Activated CD4-positive, alpha-beta T cell treated with anti-CD3 and anti-CD28 coated beads for 36 hours (primary cell): ENCODE measurements at regions of chr10 and their contacts with region 1.

Region 1: DNA sequence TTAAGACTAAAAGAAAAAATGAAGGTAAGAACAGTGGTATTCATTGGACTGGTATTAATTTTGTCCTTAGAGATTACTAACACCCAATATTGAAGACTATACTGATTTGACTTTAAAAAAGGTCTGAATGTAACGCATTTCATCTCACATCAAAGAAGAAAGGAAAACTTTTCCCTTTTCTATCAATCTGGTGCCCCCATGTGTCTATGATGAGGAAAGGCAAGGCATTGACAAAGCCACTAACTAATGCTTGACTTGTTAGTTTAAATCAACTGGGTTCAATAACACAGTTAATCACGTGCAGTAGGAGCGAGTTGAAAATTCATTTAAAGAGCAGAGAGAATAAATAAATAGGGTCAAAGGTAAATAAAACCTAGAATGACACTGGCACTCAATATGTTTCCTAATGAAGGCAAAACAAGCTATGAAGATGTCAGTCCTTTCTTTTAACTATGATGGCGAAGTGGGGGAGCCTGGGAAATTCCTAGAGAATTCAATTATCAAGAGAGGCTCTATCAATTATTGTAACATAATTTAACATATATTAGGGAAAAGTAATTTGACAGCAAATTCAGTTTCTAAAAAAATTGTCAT is 180.9 kb downstream of the ANK3 start:
- DNase-seq: no peak
- ATAC-seq: no peak
- H3K4me3 Mint-ChIP-seq: no peak overlapping the region
- H3K27ac Mint-ChIP-seq: no peak overlapping the region
- H3K4me1 Mint-ChIP-seq: peaks cover 15% of the 10 kb centered on the region
- H3K27me3 Mint-ChIP-seq: no peaks in the 10 kb centered on the region

Region 2: GRCh38 chr10:60114765-60115586 is 93.8 kb before region 1 on chr10:
- CTCF ChIA-PET with region 1: interaction called, 7 read pairs
- POLR2A ChIA-PET with region 1: no interaction called
- intact Hi-C with region 1: loop called (anchors 1 to 5 kb)
- DNase-seq: peak; percentile 16
- ATAC-seq: peak; percentile 60
- H3K4me3 Mint-ChIP-seq: no peak overlapping the region
- H3K27ac Mint-ChIP-seq: no peak overlapping the region
- H3K4me1 Mint-ChIP-seq: no peaks in the 10 kb centered on the region
- H3K27me3 Mint-ChIP-seq: no peaks in the 10 kb centered on the region